ENCODE measurements at regions of chr3 and their contacts with region 1.

Region 1: DNA sequence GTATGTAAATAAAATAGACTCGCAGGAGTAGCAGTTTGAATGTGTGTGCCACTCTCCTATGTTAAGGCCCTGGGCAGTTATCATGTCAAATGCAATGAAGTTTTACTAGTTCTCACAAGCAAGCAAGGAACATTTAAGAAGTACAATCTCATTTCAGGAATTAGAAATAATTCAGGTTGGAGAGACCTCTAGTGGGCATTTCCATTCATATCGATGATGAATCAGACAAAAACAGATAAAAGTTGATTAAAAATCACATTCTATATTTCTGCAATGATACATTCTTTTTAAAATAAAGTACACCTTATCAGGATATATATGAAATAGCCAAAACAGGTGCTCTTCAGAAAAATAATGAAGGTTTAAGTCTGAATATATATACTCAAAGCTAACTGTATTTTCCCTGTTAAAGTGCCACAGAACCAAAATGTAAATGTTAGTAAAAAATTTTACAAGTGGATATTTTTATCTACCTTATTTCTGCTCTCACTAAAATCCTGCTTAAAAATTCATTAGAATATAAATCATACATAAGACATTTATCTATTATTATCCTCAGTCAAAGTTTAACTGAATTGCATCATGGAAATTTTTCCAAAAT is 492.4 kb upstream of the FRG2C start:
- DNase-seq: no peak
- H3K4me3 ChIP-seq: no peak overlapping the region
- H3K27ac ChIP-seq: no peak overlapping the region
- H3K4me1 ChIP-seq: no peaks in the 10 kb centered on the region
- H3K27me3 ChIP-seq: no peaks in the 10 kb centered on the region
- CTCF ChIP-seq: peak; percentile 41; the same call in 1 of the 2 replicates

Region 2: DNA sequence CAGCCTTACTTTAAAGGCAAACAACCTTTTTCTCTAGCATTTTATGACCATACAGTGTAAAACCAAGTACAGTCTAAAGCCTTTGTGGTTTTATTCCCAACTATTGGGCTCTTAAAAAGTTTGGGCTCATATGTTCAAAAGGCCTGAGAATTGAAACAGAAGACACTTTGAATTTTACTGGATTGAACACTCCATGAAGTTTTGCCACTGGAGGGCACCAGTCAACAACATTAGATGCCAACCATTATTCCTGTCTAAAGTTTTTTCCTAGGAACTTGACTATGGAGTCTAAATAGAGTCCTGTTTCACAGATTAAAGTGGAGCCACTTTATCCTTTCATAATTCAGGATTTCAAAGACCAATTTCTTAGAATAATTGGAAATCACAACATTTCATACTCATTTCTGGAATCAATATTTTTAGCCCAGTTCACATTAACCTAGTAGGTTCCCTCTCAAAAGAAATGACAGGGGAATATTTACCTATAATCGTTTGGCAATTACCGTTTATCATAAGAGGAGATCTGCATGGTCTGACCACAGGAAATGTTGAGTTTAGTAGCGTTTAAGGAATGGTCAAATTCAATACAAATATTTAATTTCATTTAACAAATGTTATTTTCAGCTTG is 1302.9 kb before region 1 on chr3:
- CTCF ChIA-PET with region 1: no interaction called
- POLR2A ChIA-PET with region 1: no interaction called
- intact Hi-C with region 1: loop called (anchors 5 kb)
- DNase-seq: peak; percentile 15
- H3K4me3 ChIP-seq: no peak overlapping the region
- H3K27ac ChIP-seq: no peak overlapping the region
- H3K4me1 ChIP-seq: no peaks in the 10 kb centered on the region
- H3K27me3 ChIP-seq: no peaks in the 10 kb centered on the region
- CTCF ChIP-seq: peak; percentile 50

Region 3: GRCh38 chr3:74771401-74771800 is 400.3 kb before region 1 on chr3:
- CTCF ChIA-PET with region 1: no interaction called
- POLR2A ChIA-PET with region 1: no interaction called
- intact Hi-C with region 1: no loop called
- DNase-seq: no peak
- H3K4me3 ChIP-seq: no peak overlapping the region
- H3K27ac ChIP-seq: no peak overlapping the region
- H3K4me1 ChIP-seq: no peaks in the 10 kb centered on the region
- H3K27me3 ChIP-seq: no peaks in the 10 kb centered on the region
- CTCF ChIP-seq: no peak

Region 4: DNA sequence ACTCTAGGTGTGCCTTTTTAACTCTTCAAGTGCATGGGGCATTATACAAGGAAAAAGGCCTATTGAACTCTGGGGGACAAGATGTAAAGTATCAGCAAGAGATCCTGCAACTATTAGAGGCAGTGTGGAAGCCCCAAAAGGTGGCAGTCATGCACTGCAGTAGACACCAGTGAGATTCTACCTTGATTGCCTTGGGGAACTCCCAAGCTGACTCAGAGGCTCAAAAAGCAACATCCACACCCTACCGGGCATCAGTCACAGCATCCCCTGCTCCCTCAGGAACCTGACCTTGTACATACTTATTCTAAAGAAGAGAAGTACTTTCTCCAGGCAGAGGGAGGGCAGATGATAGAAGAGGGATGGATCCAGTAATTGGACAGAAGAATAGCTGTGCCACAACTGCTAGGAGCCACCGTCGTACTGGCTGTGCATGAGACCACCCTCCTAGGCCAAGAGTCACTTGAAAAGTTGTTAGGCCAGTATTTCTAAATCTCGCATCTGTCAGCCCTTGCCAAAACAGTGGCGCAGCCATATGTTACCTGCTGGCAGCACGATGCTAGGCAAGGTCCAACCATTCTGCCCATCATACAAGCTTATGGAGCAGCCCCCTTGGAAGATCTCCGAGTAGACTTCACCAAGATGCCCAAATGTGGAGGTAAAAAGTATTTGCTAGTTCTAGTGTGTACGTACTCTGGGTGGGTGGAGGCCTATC is 30.7 kb before region 1 on chr3:
- CTCF ChIA-PET with region 1: no interaction called
- POLR2A ChIA-PET with region 1: interaction called, 17 read pairs
- intact Hi-C with region 1: no loop called
- DNase-seq: no peak
- H3K4me3 ChIP-seq: no peak overlapping the region
- H3K27ac ChIP-seq: no peak overlapping the region
- H3K4me1 ChIP-seq: no peaks in the 10 kb centered on the region
- H3K27me3 ChIP-seq: no peaks in the 10 kb centered on the region
- CTCF ChIP-seq: no peak

Region 5: GRCh38 chr3:75727985-75728384 is 556.3 kb after region 1 on chr3:
- CTCF ChIA-PET with region 1: no interaction called
- POLR2A ChIA-PET with region 1: no interaction called
- intact Hi-C with region 1: no loop called
- DNase-seq: no peak
- H3K4me3 ChIP-seq: no peak overlapping the region
- H3K27ac ChIP-seq: no peak overlapping the region
- H3K4me1 ChIP-seq: no peaks in the 10 kb centered on the region
- H3K27me3 ChIP-seq: no peaks in the 10 kb centered on the region
- CTCF ChIP-seq: no peak

Region 6: GRCh38 chr3:76505202-76505845 is 1333.6 kb after region 1 on chr3:
- CTCF ChIA-PET with region 1: no interaction called
- POLR2A ChIA-PET with region 1: no interaction called
- intact Hi-C with region 1: no loop called
- DNase-seq: no peak
- H3K4me3 ChIP-seq: no peak overlapping the region
- H3K27ac ChIP-seq: no peak overlapping the region
- H3K4me1 ChIP-seq: no peaks in the 10 kb centered on the region
- H3K27me3 ChIP-seq: no peaks in the 10 kb centered on the region
- CTCF ChIP-seq: no peak